Activated T-helper 1 cell treated with anti-CD3 and anti-CD28 coated beads, Interleukin-12 subunit alpha, Interleukin-12 subunit beta, Interleukin-2, Interleukin-4 antibody, amounts not matched to agents 30 ng/mL and 10 ng/mL and 1 ng/mL, durations not matched to agents 14 hours and 24 hours and 36 hours (primary cell): ENCODE measurements at regions of chr17 and their contacts with region 1.

Region 1: GRCh38 chr17:67824735-67825626 is at the start of gene BPTF:
- DNase-seq: peak; percentile 91
- H3K4me3 Mint-ChIP-seq: peak within 1 kb of the TSS; percentile 95
- H3K27ac Mint-ChIP-seq: peak within 1 kb of the TSS; percentile 99
- H3K4me1 Mint-ChIP-seq: peaks cover 39% of the 10 kb centered on the region
- H3K27me3 Mint-ChIP-seq: peaks cover 19% of the 10 kb centered on the region
- total RNA-seq, gene BPTF: 76.6 and 78.4 TPM in 2 replicates

Region 2: DNA sequence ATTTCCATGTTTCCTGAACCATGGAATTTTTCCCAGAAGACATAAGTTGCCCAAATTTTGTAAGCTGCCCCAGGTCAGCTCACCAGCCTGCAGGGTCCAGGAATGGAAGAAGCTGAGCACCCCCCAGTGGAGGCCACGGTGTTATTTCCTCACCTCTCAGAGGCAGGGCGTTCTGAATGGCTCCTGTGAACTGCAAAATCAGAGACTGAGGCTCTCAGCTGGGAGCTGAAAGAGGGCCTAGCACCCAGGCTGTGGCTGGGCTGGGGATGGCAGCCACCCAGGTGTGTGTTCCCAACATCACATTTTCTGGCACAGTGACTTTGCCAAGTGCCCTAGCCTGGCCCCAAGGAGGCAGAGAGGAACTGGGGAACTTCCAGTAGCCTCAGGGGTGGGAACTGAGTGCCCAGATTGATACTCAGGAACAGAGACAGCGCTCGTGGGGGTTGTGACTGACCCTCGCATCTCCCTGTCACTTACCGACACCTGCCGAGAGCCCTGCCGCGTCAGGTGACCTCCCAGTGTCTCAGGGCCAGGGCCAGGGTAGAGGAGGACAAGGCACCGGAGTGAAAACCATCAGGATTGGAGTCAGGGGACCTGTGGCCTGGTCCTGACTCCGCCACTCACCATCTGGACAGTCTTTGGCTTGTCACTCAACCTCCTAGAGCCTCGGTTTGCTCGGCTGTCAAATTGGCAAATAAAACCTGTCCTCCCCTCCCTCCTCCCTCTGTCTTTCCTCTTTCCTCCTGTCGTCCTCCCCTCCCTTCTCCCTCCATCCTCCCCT is 849.2 kb before region 1 on chr17:
- intact Hi-C with region 1: no loop called
- DNase-seq: no peak
- H3K4me3 Mint-ChIP-seq: no peak overlapping the region
- H3K27ac Mint-ChIP-seq: no peak overlapping the region
- H3K4me1 Mint-ChIP-seq: no peaks in the 10 kb centered on the region
- H3K27me3 Mint-ChIP-seq: peaks cover 16% of the 10 kb centered on the region

Region 3: GRCh38 chr17:67245073-67245755 is 579.8 kb before region 1 on chr17 and contains the start of gene HELZ:
- intact Hi-C with region 1: loop called (anchors 10 kb)
- DNase-seq: peak; percentile 70
- H3K4me3 Mint-ChIP-seq: peak within 1 kb of the TSS; percentile 89
- H3K27ac Mint-ChIP-seq: peak within 1 kb of the TSS; percentile 78
- H3K4me1 Mint-ChIP-seq: peaks cover 44% of the 10 kb centered on the region
- H3K27me3 Mint-ChIP-seq: peaks cover 4% of the 10 kb centered on the region
- total RNA-seq, gene HELZ: 65.8 and 70.4 TPM in 2 replicates

Region 4: GRCh38 chr17:67717624-67718329 is 107.2 kb before region 1 on chr17 and contains the start of gene NOL11:
- intact Hi-C with region 1: loop called (anchors 1 kb)
- DNase-seq: peak; percentile 99
- H3K4me3 Mint-ChIP-seq: peak within 1 kb of the TSS; percentile 99
- H3K27ac Mint-ChIP-seq: peak within 1 kb of the TSS; percentile 99
- H3K4me1 Mint-ChIP-seq: peaks cover 16% of the 10 kb centered on the region
- H3K27me3 Mint-ChIP-seq: peaks cover 4% of the 10 kb centered on the region
- total RNA-seq, gene NOL11: 107 and 118 TPM in 2 replicates

Region 5: DNA sequence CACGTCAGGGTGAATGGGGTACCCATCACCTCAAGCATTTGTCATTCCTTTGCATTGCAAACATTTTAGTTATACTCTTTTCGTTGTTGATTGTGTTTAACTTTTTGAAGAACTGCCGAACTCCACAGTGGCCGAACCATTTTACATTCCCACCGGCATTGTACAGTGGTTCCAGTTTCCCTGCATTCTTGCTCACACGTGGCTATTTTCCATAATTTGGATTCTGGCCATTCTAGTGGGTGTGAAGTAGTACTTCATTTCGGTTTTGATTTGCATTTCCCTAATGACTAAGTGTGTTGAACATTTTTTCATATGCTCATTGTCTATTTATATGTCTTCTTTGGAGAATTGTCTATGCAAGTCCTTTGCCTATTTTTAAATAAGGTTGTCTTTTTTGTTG is 94.2 kb before region 1 on chr17:
- intact Hi-C with region 1: no loop called
- DNase-seq: no peak
- H3K4me3 Mint-ChIP-seq: no peak overlapping the region
- H3K27ac Mint-ChIP-seq: no peak overlapping the region
- H3K4me1 Mint-ChIP-seq: peaks cover 30% of the 10 kb centered on the region
- H3K27me3 Mint-ChIP-seq: no peaks in the 10 kb centered on the region

Region 6: DNA sequence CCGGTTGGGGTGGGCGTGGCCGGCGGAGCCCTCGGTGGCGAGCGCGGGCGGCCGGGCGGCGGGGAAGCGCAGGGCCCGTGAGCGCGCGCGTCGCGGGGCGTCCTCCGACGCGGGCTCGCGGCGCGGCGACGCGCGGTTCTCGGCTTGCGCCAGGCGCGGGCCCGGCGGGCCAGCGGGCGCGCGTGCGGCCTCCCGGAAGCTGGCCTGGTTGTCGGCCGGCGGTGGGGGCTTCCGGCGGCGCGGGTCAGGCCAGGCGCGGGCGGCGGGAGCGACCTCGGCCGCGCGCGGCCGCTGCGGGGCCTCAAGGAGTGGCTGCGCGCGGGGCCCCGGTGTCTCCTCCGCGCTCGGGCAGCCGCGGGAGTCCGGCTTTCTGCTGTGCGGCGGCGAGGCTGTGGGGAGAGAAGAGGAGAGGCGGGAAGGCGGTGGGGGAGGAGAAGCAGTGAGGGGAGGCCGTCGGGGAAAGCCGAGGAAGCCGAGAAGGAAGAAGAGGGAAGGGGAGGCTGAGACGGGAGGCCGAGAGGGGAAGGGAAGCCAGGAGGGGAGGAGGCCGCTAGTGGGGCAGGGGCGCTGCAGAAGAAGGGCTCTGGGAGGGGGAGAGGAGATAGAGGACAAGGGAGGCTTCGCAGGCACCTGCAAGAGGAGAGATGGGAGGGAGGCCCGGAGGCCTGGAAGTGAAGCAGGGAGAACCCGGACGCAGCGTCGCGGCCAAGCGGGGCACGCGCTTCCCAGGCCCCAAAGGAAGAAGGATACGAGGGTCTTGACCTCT is 168.8 kb after region 1 on chr17:
- intact Hi-C with region 1: loop called (anchors 2 kb)
- DNase-seq: peak; percentile 68
- H3K4me3 Mint-ChIP-seq: peak overlapping the region; percentile 85
- H3K27ac Mint-ChIP-seq: peak overlapping the region; percentile 84
- H3K4me1 Mint-ChIP-seq: peaks cover 30% of the 10 kb centered on the region
- H3K27me3 Mint-ChIP-seq: peaks cover 26% of the 10 kb centered on the region

Region 7: DNA sequence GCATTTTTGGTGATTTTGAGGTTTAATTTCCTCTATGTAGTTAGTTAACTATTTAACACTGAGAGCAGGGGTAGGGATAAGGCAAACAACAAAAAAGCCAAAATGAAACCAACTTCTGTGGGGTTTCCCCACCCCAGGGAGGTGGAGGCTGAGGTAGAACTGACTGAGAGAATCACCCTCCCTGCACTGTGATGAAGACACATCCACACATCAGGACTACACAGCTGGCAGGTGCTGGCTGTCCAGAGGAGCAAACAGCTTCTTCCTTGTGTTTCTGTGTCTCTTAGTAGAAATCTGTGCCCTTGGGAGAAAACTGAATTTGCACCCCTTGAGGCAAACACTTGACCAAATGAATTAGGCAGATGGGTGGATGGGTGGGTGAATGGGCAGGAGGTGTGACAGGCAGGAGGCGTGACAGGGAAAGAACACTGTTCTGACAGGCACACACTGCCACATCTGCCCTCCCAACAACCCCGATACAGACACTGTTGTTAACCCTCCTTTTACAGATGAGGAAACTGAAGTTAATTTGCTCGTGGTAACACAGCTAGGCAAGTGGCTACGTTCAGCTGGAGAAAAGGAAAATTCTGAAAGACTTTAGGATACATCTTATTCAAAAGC is 359.9 kb after region 1 on chr17:
- intact Hi-C with region 1: loop called (anchors 5 kb)
- DNase-seq: peak; percentile 70
- H3K4me3 Mint-ChIP-seq: peak overlapping the region; percentile 51
- H3K27ac Mint-ChIP-seq: peak overlapping the region; percentile 53
- H3K4me1 Mint-ChIP-seq: peaks cover 57% of the 10 kb centered on the region
- H3K27me3 Mint-ChIP-seq: peaks cover 10% of the 10 kb centered on the region

Region 8: GRCh38 chr17:68512247-68512982 is 687.4 kb after region 1 on chr17 and contains the start of gene PRKAR1A:
- intact Hi-C with region 1: loop called (anchors 5 kb)
- DNase-seq: peak; percentile 91
- H3K4me3 Mint-ChIP-seq: peak within 1 kb of the TSS; percentile 97
- H3K27ac Mint-ChIP-seq: peak within 1 kb of the TSS; percentile 99
- H3K4me1 Mint-ChIP-seq: peaks cover 59% of the 10 kb centered on the region
- H3K27me3 Mint-ChIP-seq: no peaks in the 10 kb centered on the region
- total RNA-seq, gene PRKAR1A: 209 and 214 TPM in 2 replicates